IMR-90 (cell line): ENCODE measurements at regions of chr5 and their contacts with region 1.

Region 1: GRCh38 chr5:172959824-172960799 is 888 bp downstream of the RPL26L1 start:
- DNase-seq: no peak
- ATAC-seq: 0 out of 2 replicates have a peak, but pooled peaks have one; percentile 1
- H3K4me3 ChIP-seq: peak overlapping the region; percentile 91
- H3K27ac ChIP-seq: peak overlapping the region; percentile 94
- H3K4me1 ChIP-seq: peaks cover 8% of the 10 kb centered on the region
- H3K27me3 ChIP-seq: no peaks in the 10 kb centered on the region
- CTCF ChIP-seq: no peak
- POLR2A ChIP-seq: no peak
- RAD21 ChIP-seq: no peak

Region 2: GRCh38 chr5:173016621-173017047 is 56.5 kb after region 1 on chr5:
- CTCF ChIA-PET with region 1: no interaction called
- POLR2A ChIA-PET with region 1: no interaction called
- dilution Hi-C with region 1: no loop called
- in situ Hi-C with region 1: no loop called
- intact Hi-C with region 1: no loop called
- DNase-seq: peak; percentile 71
- ATAC-seq: peak; percentile 74
- H3K4me3 ChIP-seq: no peak overlapping the region
- H3K27ac ChIP-seq: peak overlapping the region; percentile 22; the same call in 1 of the 2 replicates
- H3K4me1 ChIP-seq: peaks cover 15% of the 10 kb centered on the region
- H3K27me3 ChIP-seq: no peaks in the 10 kb centered on the region
- CTCF ChIP-seq: no peak
- POLR2A ChIP-seq: no peak
- RAD21 ChIP-seq: no peak

Region 3: DNA sequence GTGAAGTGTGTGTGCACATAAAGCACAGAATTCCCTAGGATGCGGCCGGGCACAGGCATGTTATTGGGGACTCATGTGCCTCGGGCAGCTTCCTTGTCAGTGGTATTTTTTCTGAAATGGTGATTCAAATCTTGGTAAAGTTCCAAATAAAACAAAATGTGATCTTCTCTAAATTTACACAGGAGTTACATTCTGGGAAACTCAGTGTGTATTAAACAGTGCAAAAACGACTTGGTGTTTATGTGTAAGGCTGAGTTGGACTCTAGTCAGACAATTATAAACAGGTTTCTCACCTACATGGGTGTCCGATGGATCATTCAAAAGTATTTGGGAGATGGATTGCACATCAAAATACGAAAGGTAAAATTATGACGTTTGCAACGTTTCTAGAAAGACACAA is 607.5 kb after region 1 on chr5:
- CTCF ChIA-PET with region 1: no interaction called
- POLR2A ChIA-PET with region 1: no interaction called
- dilution Hi-C with region 1: no loop called
- in situ Hi-C with region 1: loop called (anchors 10 kb)
- intact Hi-C with region 1: no loop called
- DNase-seq: peak; percentile 77
- ATAC-seq: peak; percentile 63
- H3K4me3 ChIP-seq: no peak overlapping the region
- H3K27ac ChIP-seq: no peak overlapping the region
- H3K4me1 ChIP-seq: no peaks in the 10 kb centered on the region; the same call in none of the 2 replicates
- H3K27me3 ChIP-seq: no peaks in the 10 kb centered on the region
- CTCF ChIP-seq: no peak
- POLR2A ChIP-seq: no peak
- RAD21 ChIP-seq: no peak